ENCODE measurements at regions of chr7 and their contacts with region 1.

Region 1: GRCh38 chr7:116588641-116589594 is 64.1 kb downstream of the CAV1 start:
- DNase-seq: no peak
- H3K4me3 ChIP-seq: no peak overlapping the region
- H3K27ac ChIP-seq: no peak overlapping the region
- H3K4me1 ChIP-seq: peaks cover 0 to 6% (median 2%) of the 10 kb centered on the region in 4 experiments; a peak in 5 of 7 replicates
- H3K27me3 ChIP-seq: no peaks in the 10 kb centered on the region
- CTCF ChIP-seq: peak in 2 of 3 experiments; percentile 33 to 37; a peak in 2 of 4 replicates
- EP300 ChIP-seq: no peak
- POLR2A ChIP-seq: no peak
- RAD21 ChIP-seq: peak; percentile 76 to 78

Region 2: DNA sequence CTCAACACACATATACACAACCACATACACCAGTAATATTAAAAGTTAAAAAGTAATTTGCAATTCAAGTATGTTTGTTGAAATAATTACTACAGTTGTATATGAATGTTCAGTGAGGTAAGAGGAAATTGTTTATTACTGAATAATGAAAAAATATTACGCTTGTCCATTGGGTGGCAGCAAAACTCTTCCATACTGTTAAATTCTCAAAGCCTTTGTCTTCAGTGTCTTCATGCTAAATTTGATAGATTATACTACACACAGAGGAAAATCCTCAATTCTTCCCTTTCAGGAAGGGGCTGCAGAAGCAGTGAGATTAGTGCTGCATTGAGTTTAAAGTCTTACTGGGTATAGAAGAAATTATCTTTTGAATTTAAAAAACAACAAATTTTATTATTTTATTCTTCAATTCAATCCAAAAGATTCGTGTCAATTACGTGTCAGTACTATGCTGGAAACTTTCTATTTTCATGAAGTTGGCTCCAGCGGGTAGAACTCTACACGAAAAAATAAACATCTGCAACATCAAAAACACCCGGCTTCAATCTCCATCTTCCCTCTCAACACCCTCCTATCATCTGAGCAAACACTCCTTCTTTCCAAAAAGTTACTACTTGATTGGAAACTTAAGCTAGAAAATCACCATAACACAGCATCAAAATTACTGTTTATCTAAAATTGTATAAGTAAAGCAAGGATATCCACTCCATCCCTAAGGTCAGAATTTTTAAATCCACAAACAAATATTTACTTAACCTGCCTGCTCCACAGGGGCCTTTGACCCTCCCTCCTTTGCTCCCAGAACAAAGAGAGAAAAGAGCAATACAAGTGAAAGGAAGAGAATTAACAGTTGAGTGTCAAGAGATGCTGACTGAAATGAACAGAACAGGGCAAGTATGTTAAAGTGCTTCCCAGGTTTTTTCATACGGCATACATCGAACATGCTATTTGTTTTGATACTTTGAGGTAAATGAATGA is 415.6 kb before region 1 on chr7:
- CTCF ChIA-PET with region 1: interaction called, 27 read pairs
- POLR2A ChIA-PET with region 1: no interaction called
- DNase-seq: no peak
- H3K4me3 ChIP-seq: no peak overlapping the region
- H3K27ac ChIP-seq: no peak overlapping the region
- H3K4me1 ChIP-seq: no peaks in the 10 kb centered on the region; a peak in 1 of 7 replicates
- H3K27me3 ChIP-seq: no peaks in the 10 kb centered on the region
- CTCF ChIP-seq: peak in 1 of 3 experiments; percentile 18; a peak in 2 of 4 replicates
- EP300 ChIP-seq: no peak
- POLR2A ChIP-seq: no peak
- RAD21 ChIP-seq: peak; percentile 62 to 68

Region 3: DNA sequence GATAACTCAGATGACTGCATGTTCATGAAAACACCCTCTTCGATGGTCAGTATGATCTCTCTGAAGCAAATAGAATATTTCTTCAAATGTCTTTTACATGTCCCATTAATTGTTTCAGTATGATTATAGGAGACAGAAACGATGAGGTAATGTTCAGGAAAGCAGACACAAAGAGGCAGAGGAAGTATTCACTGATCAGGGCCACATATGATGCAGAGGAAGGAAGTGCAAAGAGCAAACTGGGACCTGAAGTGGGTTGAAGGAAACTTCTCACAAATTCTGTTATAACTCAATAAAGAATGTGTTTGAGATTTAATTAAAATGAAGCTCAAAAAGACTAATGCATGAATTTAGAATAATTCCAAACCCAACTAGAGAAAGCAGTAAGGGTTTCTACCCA is 308.1 kb before region 1 on chr7:
- CTCF ChIA-PET with region 1: interaction called, 15 read pairs
- POLR2A ChIA-PET with region 1: no interaction called
- DNase-seq: no peak
- H3K4me3 ChIP-seq: no peak overlapping the region
- H3K27ac ChIP-seq: no peak overlapping the region
- H3K4me1 ChIP-seq: peaks cover 0 to 2% (median 0%) of the 10 kb centered on the region in 4 experiments; a peak in 1 of 7 replicates
- H3K27me3 ChIP-seq: no peaks in the 10 kb centered on the region
- CTCF ChIP-seq: no peak
- EP300 ChIP-seq: no peak
- POLR2A ChIP-seq: no peak
- RAD21 ChIP-seq: no peak

Region 4: GRCh38 chr7:116616555-116617059 is 27.7 kb after region 1 on chr7:
- CTCF ChIA-PET with region 1: interaction called, 11 read pairs
- POLR2A ChIA-PET with region 1: no interaction called
- DNase-seq: peak in 1 of 2 experiments; percentile 19
- H3K4me3 ChIP-seq: peak overlapping the region in 1 of 4 experiments; percentile 13; a peak in 1 of 8 replicates
- H3K27ac ChIP-seq: no peak overlapping the region
- H3K4me1 ChIP-seq: peaks cover 3 to 11% (median 6%) of the 10 kb centered on the region in 4 experiments; a peak in 4 of 7 replicates
- H3K27me3 ChIP-seq: no peaks in the 10 kb centered on the region
- CTCF ChIP-seq: no peak
- EP300 ChIP-seq: no peak
- POLR2A ChIP-seq: no peak
- RAD21 ChIP-seq: no peak

Region 5: GRCh38 chr7:116786791-116787443 is 198.0 kb after region 1 on chr7:
- CTCF ChIA-PET with region 1: interaction called, 57 read pairs
- POLR2A ChIA-PET with region 1: no interaction called
- DNase-seq: no peak
- H3K4me3 ChIP-seq: no peak overlapping the region
- H3K27ac ChIP-seq: no peak overlapping the region
- H3K4me1 ChIP-seq: peaks cover 0 to 8% (median 6%) of the 10 kb centered on the region in 4 experiments; a peak in 4 of 7 replicates
- H3K27me3 ChIP-seq: no peaks in the 10 kb centered on the region
- CTCF ChIP-seq: peak in 2 of 3 experiments; percentile 67 to 68; a peak in 3 of 4 replicates
- EP300 ChIP-seq: no peak
- POLR2A ChIP-seq: no peak
- RAD21 ChIP-seq: peak; percentile 84 to 89

Region 6: DNA sequence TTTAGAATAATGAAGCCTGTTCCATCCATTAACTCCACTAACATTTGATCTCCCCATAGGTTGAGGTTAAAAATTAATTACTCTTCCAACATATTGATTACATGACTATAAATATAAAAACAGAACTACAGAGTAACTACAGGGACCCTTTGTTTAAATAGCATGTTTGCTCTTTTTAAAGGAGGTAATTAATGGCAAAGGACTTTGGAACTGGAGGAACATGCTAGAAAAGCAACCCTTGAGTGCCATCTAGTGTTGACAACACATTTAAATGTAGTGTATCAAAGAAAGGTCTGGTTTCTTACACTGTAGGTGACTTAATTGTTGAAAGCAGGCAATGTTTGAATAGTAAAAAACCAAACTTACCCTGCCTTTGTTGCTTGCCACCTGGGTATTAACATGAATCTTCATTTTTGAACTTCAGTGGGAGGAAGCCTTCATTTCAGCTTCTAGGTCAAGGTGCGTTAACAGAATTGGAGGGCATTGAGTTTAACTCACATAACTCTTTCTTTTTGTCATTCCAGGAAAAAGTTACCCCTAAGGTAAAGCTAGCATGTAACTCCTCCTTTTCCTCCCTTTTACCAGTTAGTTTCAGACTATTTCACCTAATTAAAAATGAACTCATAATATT is 220.8 kb after region 1 on chr7:
- CTCF ChIA-PET with region 1: interaction called, 18 read pairs
- POLR2A ChIA-PET with region 1: no interaction called
- DNase-seq: no peak
- H3K4me3 ChIP-seq: no peak overlapping the region
- H3K27ac ChIP-seq: no peak overlapping the region
- H3K4me1 ChIP-seq: peaks cover 0 to 3% (median 0%) of the 10 kb centered on the region in 4 experiments; a peak in 1 of 7 replicates
- H3K27me3 ChIP-seq: no peaks in the 10 kb centered on the region
- CTCF ChIP-seq: peak in 2 of 3 experiments; percentile 54 to 58; a peak in 2 of 4 replicates
- EP300 ChIP-seq: no peak
- POLR2A ChIP-seq: no peak
- RAD21 ChIP-seq: peak; percentile 86 to 87

Measured in H1 (cell line).